Activated CD4-positive, alpha-beta T cell treated with anti-CD3 and anti-CD28 coated beads for 36 hours (primary cell): ENCODE measurements at regions of chr4 and their contacts with region 1.

Region 1: GRCh38 chr4:139030614-139031235 is 15.1 kb downstream of the NOCT start:
- DNase-seq: peak; percentile 83
- ATAC-seq: peak; percentile 76
- H3K4me3 Mint-ChIP-seq: no peak overlapping the region
- H3K27ac Mint-ChIP-seq: peak overlapping the region; percentile 3
- H3K4me1 Mint-ChIP-seq: peaks cover 8% of the 10 kb centered on the region
- H3K27me3 Mint-ChIP-seq: no peaks in the 10 kb centered on the region

Region 2: GRCh38 chr4:138182838-138183426 is 847.8 kb before region 1 on chr4:
- CTCF ChIA-PET with region 1: no interaction called
- POLR2A ChIA-PET with region 1: interaction called, 14 read pairs
- intact Hi-C with region 1: no loop called
- DNase-seq: no peak
- ATAC-seq: no peak
- H3K4me3 Mint-ChIP-seq: no peak overlapping the region
- H3K27ac Mint-ChIP-seq: no peak overlapping the region
- H3K4me1 Mint-ChIP-seq: no peaks in the 10 kb centered on the region
- H3K27me3 Mint-ChIP-seq: peaks cover 2% of the 10 kb centered on the region

Region 3: DNA sequence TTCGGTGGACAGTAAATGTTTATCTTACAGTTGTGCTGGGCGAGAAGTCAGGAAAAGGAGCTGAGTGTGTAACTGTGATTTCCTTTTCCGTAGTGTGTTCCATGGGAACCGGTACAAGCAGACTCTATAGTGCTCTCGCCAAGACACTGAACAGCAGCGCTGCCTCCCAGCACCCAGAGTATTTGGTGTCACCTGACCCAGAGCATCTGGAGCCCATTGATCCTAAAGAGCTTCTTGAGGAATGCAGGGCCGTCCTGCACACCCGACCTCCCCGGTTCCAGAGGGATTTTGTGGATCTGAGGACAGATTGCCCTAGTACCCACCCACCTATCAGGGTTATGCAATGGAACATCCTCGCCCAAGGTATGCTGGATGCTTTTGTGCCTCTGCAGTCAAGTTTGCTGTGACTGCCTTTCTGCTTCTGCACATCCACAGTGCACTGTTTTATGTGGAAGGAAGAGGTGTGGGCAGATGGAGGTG is 12.3 kb after region 1 on chr4:
- CTCF ChIA-PET with region 1: interaction called, 26 read pairs
- POLR2A ChIA-PET with region 1: no interaction called
- intact Hi-C with region 1: no loop called
- DNase-seq: no peak
- ATAC-seq: no peak
- H3K4me3 Mint-ChIP-seq: no peak overlapping the region
- H3K27ac Mint-ChIP-seq: no peak overlapping the region
- H3K4me1 Mint-ChIP-seq: peaks cover 2% of the 10 kb centered on the region
- H3K27me3 Mint-ChIP-seq: no peaks in the 10 kb centered on the region

Region 4: DNA sequence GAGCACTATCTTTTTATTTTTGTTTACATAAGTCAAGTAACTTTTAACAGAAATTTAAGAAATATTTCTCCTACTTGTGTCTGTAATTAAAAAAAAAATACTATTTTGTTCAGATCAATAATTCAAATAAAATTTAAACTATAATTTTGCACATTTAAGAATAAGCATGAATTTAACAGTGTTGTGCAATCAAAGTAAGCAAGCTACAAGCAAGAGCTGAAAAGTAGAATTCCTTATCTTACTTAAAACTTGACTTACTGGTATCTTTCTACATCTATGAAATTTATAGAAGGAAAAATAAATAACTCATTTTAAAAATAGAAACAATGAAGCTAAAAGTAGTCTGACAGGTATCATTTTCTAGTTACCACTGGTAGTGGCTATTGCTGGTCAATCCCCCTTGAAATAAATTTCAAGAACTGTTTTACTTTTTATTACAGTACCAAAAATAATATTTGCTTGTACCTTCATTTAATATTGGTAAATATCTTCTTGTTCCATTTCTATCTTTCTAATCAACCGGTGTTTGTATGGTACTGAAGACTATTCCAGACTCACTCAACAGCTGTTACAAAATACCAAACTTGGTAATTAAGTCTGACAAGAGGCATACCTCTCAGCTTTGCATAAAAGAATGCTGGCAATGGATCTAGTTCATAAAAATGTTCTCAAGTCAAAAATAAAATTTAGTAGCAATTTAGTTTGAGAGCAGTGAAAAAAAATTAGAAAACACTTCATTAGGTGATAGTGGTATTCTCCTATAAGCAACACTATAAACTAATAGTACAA is 47.0 kb after region 1 on chr4:
- CTCF ChIA-PET with region 1: interaction called, 28 read pairs
- POLR2A ChIA-PET with region 1: interaction called, 4 read pairs
- intact Hi-C with region 1: loop called in 1 of 2 experiments (anchors 2 kb)
- DNase-seq: no peak
- ATAC-seq: no peak
- H3K4me3 Mint-ChIP-seq: no peak overlapping the region
- H3K27ac Mint-ChIP-seq: no peak overlapping the region
- H3K4me1 Mint-ChIP-seq: peaks cover 45% of the 10 kb centered on the region
- H3K27me3 Mint-ChIP-seq: no peaks in the 10 kb centered on the region

Region 5: DNA sequence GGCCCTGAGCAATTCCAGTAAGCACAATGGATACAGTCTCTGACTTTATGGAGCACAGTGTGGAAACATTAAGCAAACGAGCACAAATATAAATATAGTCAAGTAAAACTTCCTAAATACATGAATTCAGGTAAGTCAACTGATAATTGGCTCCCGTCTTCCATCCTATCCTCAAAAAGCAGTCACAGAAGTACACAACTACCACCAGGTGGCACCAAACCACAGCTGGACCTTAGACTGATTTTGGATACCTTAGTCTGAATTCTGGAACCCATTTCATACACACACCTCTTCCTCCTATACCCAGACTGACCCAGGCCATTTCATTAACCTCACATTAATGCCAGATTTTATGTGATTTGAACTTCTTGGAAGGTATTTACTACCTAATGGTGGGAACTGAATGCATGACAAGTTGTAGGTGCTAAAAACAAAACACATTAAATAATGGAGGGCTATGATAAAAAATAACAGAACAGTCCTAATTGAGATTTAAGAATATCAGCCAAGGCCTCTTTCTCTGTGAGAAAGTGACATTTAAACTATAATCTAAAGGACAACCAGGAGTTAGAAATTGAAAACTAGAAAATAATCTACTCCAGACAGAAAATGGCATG is 68.7 kb after region 1 on chr4:
- CTCF ChIA-PET with region 1: interaction called, 25 read pairs
- POLR2A ChIA-PET with region 1: no interaction called
- intact Hi-C with region 1: loop called in 1 of 2 experiments (anchors 2 kb)
- DNase-seq: peak; percentile 84
- ATAC-seq: peak; percentile 66
- H3K4me3 Mint-ChIP-seq: no peak overlapping the region
- H3K27ac Mint-ChIP-seq: no peak overlapping the region
- H3K4me1 Mint-ChIP-seq: peaks cover 2% of the 10 kb centered on the region
- H3K27me3 Mint-ChIP-seq: no peaks in the 10 kb centered on the region

Region 6: GRCh38 chr4:139144161-139144859 is 113.6 kb after region 1 on chr4:
- CTCF ChIA-PET with region 1: no interaction called
- POLR2A ChIA-PET with region 1: no interaction called
- intact Hi-C with region 1: no loop called
- DNase-seq: no peak
- ATAC-seq: no peak
- H3K4me3 Mint-ChIP-seq: no peak overlapping the region
- H3K27ac Mint-ChIP-seq: no peak overlapping the region
- H3K4me1 Mint-ChIP-seq: peaks cover 12% of the 10 kb centered on the region
- H3K27me3 Mint-ChIP-seq: no peaks in the 10 kb centered on the region

Region 7: DNA sequence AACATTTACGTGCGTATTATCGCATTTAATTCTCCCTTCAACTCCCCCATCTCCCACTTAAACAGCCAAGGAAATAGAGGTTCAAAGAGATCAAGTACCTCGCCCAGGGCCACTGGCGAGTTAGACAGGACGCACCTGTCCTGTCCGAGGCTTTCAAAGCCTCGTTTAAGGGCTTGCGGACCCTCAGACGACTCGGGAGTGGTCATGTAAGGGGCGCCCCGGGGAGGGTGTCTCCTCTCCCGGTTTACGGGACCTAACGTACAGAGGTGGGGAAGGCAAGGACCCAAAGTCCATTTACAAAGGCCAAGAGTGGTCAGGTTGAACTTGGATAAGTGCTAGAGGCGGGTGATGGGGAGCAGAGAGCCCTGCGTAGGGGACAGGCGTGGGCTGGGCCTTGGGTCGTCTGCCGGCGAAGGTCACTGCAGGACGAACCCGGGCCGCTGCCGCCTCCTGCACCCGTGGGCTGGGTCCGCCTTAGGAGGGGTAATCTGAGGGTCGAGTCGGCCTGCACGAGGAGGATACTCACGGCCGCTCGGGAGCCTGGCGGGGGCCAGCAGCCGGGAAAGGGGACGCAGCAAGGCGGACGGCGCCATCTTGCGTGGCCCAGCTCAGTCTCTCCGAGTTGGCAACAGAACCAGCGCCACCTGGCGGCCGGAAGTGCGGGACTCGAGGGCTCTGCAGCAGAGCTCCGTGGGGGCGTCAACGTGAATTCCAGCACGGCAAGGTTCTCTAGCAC is 264.6 kb after region 1 on chr4:
- CTCF ChIA-PET with region 1: interaction called, 21 read pairs
- POLR2A ChIA-PET with region 1: interaction called, 3 read pairs
- intact Hi-C with region 1: loop called in 1 of 2 experiments (anchors 1 kb)
- DNase-seq: peak; percentile 99
- ATAC-seq: peak; percentile 89
- H3K4me3 Mint-ChIP-seq: peak overlapping the region; percentile 95
- H3K27ac Mint-ChIP-seq: peak overlapping the region; percentile 96
- H3K4me1 Mint-ChIP-seq: peaks cover 38% of the 10 kb centered on the region
- H3K27me3 Mint-ChIP-seq: no peaks in the 10 kb centered on the region

Region 8: GRCh38 chr4:139651282-139652194 is 620.8 kb after region 1 on chr4:
- CTCF ChIA-PET with region 1: no interaction called
- POLR2A ChIA-PET with region 1: no interaction called
- intact Hi-C with region 1: loop called in 1 of 2 experiments (anchors 5 kb)
- DNase-seq: peak; percentile 84
- ATAC-seq: peak; percentile 85
- H3K4me3 Mint-ChIP-seq: no peak overlapping the region
- H3K27ac Mint-ChIP-seq: peak overlapping the region; percentile 5
- H3K4me1 Mint-ChIP-seq: peaks cover 5% of the 10 kb centered on the region
- H3K27me3 Mint-ChIP-seq: no peaks in the 10 kb centered on the region